ENCODE measurements at regions of chr7 and their contacts with region 1.

Region 1: DNA sequence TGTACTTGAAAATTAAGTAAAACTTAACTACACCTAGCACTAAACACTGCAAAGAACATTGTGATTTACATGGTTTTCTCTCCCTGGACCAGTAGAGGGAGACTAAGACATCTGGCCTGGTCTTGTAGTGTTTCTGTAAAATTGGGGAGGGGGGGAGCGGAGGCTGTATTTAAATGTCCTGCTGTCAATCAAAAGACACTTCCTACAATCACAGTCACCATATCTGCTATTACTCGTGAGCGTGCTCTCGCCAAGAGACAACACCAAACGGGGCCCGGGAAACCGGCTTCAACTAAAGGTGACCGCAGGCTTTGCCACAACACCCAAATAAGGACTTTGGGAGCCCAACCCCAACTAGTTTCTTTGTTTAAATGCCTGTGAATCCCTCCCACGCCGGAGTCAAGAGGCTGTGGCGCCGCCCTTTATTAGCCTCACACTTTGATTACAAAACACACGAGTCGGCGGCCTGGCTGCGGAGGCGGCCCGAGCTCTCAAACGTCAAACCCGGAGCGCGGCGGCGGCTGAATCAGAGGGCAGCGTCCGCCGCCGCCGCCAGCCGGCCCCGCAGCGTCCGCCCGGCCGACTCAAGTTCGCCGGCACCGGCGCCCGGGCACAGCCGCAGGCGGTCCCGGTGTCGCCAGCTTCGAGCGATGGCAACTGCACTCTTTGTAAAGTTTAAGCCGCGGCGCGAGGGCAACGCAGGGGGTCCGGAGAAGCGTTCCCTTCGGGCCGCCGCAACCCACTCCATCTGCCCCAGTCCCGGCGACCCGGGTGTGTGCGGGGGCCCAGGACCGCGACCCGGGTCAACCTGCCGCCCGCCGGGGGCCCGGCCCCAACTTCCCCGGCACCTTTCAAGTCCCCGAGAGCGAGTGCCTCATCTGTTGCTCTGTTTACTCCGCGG is 1.3 kb downstream of the KDM7A start:
- DNase-seq: peak; percentile 96 to 98
- H3K4me3 ChIP-seq: peak overlapping the region; percentile 79
- CTCF ChIP-seq: peak in 1 of 3 donors; percentile 86
- POLR2A ChIP-seq: peak in 1 of 2 donors; percentile 80

Region 2: GRCh38 chr7:139797607-139798006 is 377.9 kb before region 1 on chr7:
- intact Hi-C with region 1: no loop called
- DNase-seq: no peak
- H3K4me3 ChIP-seq: no peak overlapping the region
- CTCF ChIP-seq: no peak
- POLR2A ChIP-seq: no peak

Region 3: GRCh38 chr7:140159487-140159886 is 16.0 kb before region 1 on chr7:
- intact Hi-C with region 1: no loop called
- DNase-seq: no peak
- H3K4me3 ChIP-seq: no peak overlapping the region
- CTCF ChIP-seq: no peak
- POLR2A ChIP-seq: no peak

Region 4: GRCh38 chr7:140230861-140231770 is 55.6 kb after region 1 on chr7:
- intact Hi-C with region 1: no loop called
- DNase-seq: peak; percentile 59 to 93
- H3K4me3 ChIP-seq: peak overlapping the region; percentile 36
- CTCF ChIP-seq: no peak
- POLR2A ChIP-seq: no peak

Region 5: DNA sequence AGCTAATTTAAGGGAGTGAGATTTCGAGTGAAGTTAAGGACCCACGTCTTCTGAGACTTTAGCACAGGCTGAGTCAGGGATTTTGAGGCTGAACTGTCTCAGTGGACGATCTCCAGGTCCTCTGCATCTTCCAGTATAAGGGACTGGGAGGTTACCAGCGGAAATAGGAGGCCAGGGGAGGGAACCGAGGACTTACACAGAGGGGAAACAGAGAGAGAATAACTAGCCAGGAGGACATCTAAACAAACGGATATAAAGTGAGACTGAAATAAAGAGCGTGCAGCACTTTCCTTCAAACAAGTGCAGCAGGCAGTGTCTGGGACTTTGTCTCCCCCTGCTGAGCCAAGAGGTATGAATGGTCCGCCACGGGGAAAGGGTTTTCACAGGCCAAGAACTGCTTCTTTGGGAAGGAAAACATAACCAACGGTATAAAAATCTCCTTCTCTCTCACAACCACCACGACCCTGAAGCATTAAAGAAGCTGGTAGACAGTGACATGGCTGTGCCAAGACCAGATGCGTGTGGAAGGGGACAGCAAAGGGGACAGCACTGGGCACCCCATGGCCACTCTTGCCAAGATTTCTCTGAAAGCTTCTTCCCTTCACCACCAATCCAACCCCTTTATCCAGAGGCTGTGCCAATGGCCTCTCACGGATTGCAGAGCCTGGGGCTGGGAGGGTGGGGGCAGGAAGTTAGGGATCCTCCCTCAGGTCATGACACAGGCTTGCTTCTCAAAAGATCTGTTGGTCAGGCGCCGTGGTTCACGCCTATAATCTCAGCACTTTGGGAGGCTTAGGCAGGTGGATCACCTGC is 150.9 kb after region 1 on chr7:
- intact Hi-C with region 1: loop called (anchors 10 kb)
- DNase-seq: peak; percentile 72 to 91
- H3K4me3 ChIP-seq: no peak overlapping the region
- CTCF ChIP-seq: no peak
- POLR2A ChIP-seq: no peak

Measured in lower leg skin (tissue), 4 donors.